ENCODE measurements at regions of chr10 and their contacts with region 1.

Region 1: GRCh38 chr10:8665322-8665721 is 610.8 kb downstream of the GATA3 start:
- DNase-seq: no peak
- H3K4me3 ChIP-seq: no peak overlapping the region
- H3K27ac ChIP-seq: no peak overlapping the region
- H3K4me1 ChIP-seq: no peaks in the 10 kb centered on the region
- H3K27me3 ChIP-seq: no peaks in the 10 kb centered on the region
- CTCF ChIP-seq: no peak

Region 2: DNA sequence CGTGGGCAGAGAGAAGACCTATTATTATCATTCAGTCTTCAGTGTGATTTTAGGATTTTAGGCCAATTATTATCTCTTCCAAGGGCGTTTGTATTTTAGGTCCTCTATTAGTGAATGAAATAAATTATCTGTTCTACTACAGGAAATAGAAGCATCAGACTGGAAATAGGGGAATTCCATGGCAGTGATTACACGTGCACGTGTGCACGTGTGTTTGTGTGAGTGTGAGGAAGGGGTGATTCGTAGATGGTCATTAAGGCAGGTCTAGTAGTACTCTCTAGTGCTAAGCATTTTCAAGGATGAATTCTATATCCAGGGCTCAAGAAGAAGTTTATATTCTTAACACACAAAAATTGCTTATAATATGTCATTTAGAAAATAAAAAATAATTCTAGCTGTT is 12.3 kb after region 1 on chr10:
- CTCF ChIA-PET with region 1: no interaction called
- POLR2A ChIA-PET with region 1: no interaction called
- intact Hi-C with region 1: loop called (anchors 1 kb)
- DNase-seq: no peak
- H3K4me3 ChIP-seq: no peak overlapping the region
- H3K27ac ChIP-seq: no peak overlapping the region
- H3K4me1 ChIP-seq: no peaks in the 10 kb centered on the region
- H3K27me3 ChIP-seq: no peaks in the 10 kb centered on the region
- CTCF ChIP-seq: no peak